HCT116 (cell line): ENCODE measurements at regions of chr17 and their contacts with region 1.

Region 1: DNA sequence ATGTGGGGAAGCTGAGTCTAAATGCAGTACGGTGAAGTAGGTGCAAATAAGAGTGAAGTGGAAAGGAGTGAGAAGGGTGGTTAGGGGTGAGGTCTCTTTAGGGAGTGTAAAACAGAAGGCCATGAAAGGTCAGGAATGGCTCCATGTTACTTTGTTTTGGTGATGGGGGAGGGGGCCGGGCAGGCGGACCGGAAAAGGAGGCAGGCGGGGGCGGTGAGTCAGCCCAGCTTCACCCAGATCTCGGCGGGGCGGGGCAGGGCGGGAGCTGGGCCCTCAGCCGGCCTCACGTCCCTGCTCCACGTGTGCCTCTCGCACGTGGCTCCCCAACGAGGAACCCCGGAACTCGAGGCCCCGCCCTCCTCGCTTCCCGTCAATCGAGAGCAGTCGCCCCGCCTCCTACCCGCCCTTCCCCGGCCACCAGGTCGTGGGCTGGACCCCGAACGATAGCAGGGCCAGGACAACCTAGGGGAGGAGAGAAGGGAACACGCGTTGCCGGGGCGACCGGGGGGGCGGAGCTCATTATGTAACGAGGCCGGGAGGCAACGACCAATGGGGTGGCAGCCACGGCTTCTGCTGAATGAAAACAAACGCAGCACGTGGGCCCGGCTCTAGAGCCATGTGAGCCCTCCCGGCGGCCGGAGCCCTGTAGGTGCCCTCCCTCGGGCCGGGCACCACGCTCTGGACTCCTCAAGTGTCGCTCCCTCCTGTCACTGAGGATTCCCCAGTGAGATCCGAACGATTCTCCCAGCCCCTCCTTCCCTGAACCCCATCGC is 1.4 kb downstream of the NR1D1 start:
- DNase-seq: peak; percentile 99
- ATAC-seq: peak; percentile 76
- H3K4me3 ChIP-seq: peak overlapping the region; percentile 76 to 86
- H3K27ac ChIP-seq: peak overlapping the region; percentile 96
- H3K4me1 ChIP-seq: peaks cover 33 to 64% of the 10 kb centered on the region in 2 experiments
- H3K27me3 ChIP-seq: no peaks in the 10 kb centered on the region
- CTCF ChIP-seq: no peak
- POLR2A ChIP-seq: no peak
- RAD21 ChIP-seq: no peak

Region 2: GRCh38 chr17:40063187-40063771 is 35.8 kb before region 1 on chr17:
- CTCF ChIA-PET with region 1: interaction called, 3 read pairs
- POLR2A ChIA-PET with region 1: interaction called, 10 read pairs
- RAD21 ChIA-PET with region 1: no interaction called
- intact Hi-C with region 1: no loop called
- DNase-seq: no peak
- ATAC-seq: peak; percentile 74
- H3K4me3 ChIP-seq: peak overlapping the region; percentile 81 to 92
- H3K27ac ChIP-seq: peak overlapping the region; percentile 88
- H3K4me1 ChIP-seq: peaks cover 32 to 43% of the 10 kb centered on the region in 2 experiments
- H3K27me3 ChIP-seq: no peaks in the 10 kb centered on the region
- CTCF ChIP-seq: no peak
- POLR2A ChIP-seq: no peak
- RAD21 ChIP-seq: no peak

Region 3: DNA sequence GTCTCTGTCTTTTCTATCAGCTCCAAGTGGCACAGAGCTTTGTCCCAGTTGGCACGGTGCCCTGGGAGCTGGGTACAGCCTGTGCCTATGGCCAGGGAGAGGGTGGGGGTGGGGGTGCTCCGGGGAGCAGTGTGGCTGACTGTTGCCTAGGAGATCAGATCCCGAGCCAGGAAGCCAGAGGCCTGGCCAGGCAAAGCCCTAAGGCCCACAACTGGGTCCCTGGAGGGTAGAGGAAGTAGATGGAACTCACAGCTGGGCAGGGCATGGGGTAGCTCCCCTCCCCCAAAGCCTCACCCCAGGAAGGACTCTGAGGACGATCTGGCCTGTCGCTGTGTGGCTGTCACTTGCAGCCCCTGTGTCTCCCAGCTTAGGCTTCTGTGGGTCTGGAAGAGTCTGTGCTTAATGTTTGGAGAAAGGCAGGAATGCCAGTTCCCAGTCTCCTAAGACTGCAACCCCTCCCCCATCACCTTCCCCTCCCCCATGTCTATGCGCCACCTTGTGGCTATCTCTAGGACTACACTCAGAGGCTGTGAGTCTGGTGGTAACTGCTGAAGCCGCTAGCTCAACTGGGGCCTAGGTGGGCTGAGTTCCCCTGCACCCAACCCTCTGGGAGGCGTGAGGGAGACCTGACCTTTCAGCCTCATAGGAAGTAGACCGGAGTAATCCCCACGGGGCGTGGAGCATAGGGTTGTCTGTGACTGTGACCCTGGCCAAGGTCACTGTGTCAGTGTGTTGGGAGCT is 23.7 kb before region 1 on chr17:
- CTCF ChIA-PET with region 1: interaction called, 9 read pairs
- POLR2A ChIA-PET with region 1: interaction called, 18 read pairs
- RAD21 ChIA-PET with region 1: interaction called in 1 of 2 experiments, 3 read pairs
- intact Hi-C with region 1: no loop called
- DNase-seq: no peak
- ATAC-seq: peak; percentile 76
- H3K4me3 ChIP-seq: no peak overlapping the region
- H3K27ac ChIP-seq: peak overlapping the region; percentile 52; the same call in 1 of the 2 replicates
- H3K4me1 ChIP-seq: peaks cover 50 to 52% of the 10 kb centered on the region in 2 experiments
- H3K27me3 ChIP-seq: no peaks in the 10 kb centered on the region
- CTCF ChIP-seq: peak in 2 of 3 experiments; percentile 90 to 91; a peak in 5 of 6 replicates
- POLR2A ChIP-seq: no peak
- RAD21 ChIP-seq: no peak

Region 4: GRCh38 chr17:40139566-40140058 is 40.6 kb after region 1 on chr17:
- CTCF ChIA-PET with region 1: no interaction called
- POLR2A ChIA-PET with region 1: interaction called, 13 read pairs
- RAD21 ChIA-PET with region 1: no interaction called
- intact Hi-C with region 1: no loop called
- DNase-seq: no peak
- ATAC-seq: 0 out of 2 replicates have a peak, but pooled peaks have one; percentile 0
- H3K4me3 ChIP-seq: peak overlapping the region; percentile 81 to 95
- H3K27ac ChIP-seq: peak overlapping the region; percentile 95
- H3K4me1 ChIP-seq: peaks cover 6 to 21% of the 10 kb centered on the region in 2 experiments
- H3K27me3 ChIP-seq: no peaks in the 10 kb centered on the region
- CTCF ChIP-seq: no peak
- POLR2A ChIP-seq: no peak
- RAD21 ChIP-seq: no peak